H1 (cell line): ENCODE measurements at regions of chr2 and their contacts with region 1.

Region 1: GRCh38 chr2:60522476-60522875 is 31.0 kb downstream of the BCL11A start:
- DNase-seq: peak in 1 of 2 experiments; percentile 44
- H3K4me3 ChIP-seq: no peak overlapping the region
- H3K27ac ChIP-seq: no peak overlapping the region
- H3K4me1 ChIP-seq: peaks cover 5 to 46% (median 27%) of the 10 kb centered on the region in 4 experiments
- H3K27me3 ChIP-seq: no peaks in the 10 kb centered on the region
- CTCF ChIP-seq: no peak
- EP300 ChIP-seq: no peak
- POLR2A ChIP-seq: no peak
- RAD21 ChIP-seq: no peak

Region 2: DNA sequence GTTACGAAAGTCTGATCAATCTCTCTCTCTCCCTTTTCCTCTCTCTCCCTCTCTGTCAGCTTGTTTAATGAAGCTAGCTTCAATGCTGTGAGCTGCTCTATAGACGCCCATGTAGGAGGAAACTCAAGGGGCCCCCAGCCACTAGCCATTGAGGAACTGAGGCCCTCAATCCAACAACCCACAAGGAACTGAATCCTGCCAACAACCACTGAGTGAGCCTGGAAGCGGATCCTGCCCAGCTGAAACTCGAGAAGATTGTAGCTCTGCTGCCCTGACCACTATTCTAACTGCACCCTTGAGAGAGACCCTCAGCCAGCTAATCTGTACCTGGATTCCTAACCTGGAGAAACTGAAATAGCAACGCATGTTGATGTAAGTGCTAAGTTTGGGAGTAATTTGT is 98.2 kb before region 1 on chr2:
- CTCF ChIA-PET with region 1: no interaction called
- POLR2A ChIA-PET with region 1: no interaction called
- DNase-seq: no peak
- H3K4me3 ChIP-seq: no peak overlapping the region
- H3K27ac ChIP-seq: no peak overlapping the region
- H3K4me1 ChIP-seq: peaks cover 0 to 12% (median 8%) of the 10 kb centered on the region in 4 experiments; a peak in 4 of 7 replicates
- H3K27me3 ChIP-seq: no peaks in the 10 kb centered on the region
- CTCF ChIP-seq: no peak
- EP300 ChIP-seq: no peak
- POLR2A ChIP-seq: no peak
- RAD21 ChIP-seq: no peak

Region 3: DNA sequence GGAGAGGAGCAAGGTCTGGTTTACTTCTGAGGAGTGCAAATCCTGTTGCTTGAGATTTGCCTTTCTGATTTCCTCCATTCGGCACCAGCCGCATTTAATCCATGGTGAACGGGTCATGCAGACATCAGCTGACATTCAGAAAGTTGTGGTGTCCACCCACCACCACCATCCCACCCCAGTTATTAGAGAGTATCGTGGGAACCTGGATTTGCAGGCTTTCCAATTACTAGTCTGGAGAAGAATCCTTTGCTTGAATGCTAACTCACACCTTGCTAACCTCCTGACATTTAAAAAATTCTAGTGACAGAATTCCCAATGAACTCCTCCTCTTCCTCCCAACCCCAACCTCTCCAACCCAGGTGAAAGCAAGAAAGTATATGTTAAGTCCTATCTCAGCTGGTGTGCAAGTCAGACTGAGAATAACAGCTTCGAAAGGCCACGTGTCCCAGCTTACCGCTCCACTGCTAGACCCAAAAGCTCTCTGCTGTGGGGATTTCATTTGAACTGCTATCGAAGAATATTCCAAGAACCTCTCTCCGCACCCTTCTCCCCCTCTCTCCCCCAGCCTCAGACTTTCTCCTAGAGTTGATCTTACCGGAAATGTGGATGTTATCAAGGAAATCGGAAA is 13.3 kb after region 1 on chr2:
- CTCF ChIA-PET with region 1: interaction called, 11 read pairs
- POLR2A ChIA-PET with region 1: interaction called, 9 read pairs
- DNase-seq: no peak
- H3K4me3 ChIP-seq: no peak overlapping the region
- H3K27ac ChIP-seq: no peak overlapping the region
- H3K4me1 ChIP-seq: peaks cover 24 to 50% (median 46%) of the 10 kb centered on the region in 4 experiments
- H3K27me3 ChIP-seq: peaks cover 0 to 1% (median 0%) of the 10 kb centered on the region in 4 experiments; a peak in 1 of 7 replicates
- CTCF ChIP-seq: no peak
- EP300 ChIP-seq: no peak
- POLR2A ChIP-seq: no peak
- RAD21 ChIP-seq: no peak

Region 4: GRCh38 chr2:60608679-60609078 is 86.2 kb after region 1 on chr2:
- CTCF ChIA-PET with region 1: no interaction called
- POLR2A ChIA-PET with region 1: no interaction called
- DNase-seq: no peak
- H3K4me3 ChIP-seq: no peak overlapping the region
- H3K27ac ChIP-seq: no peak overlapping the region
- H3K4me1 ChIP-seq: peaks cover 0 to 2% (median 0%) of the 10 kb centered on the region in 4 experiments; a peak in 1 of 7 replicates
- H3K27me3 ChIP-seq: no peaks in the 10 kb centered on the region
- CTCF ChIP-seq: no peak
- EP300 ChIP-seq: no peak
- POLR2A ChIP-seq: no peak
- RAD21 ChIP-seq: no peak

Region 5: GRCh38 chr2:60659026-60659425 is 136.6 kb after region 1 on chr2:
- CTCF ChIA-PET with region 1: no interaction called
- POLR2A ChIA-PET with region 1: no interaction called
- DNase-seq: no peak
- H3K4me3 ChIP-seq: no peak overlapping the region
- H3K27ac ChIP-seq: no peak overlapping the region
- H3K4me1 ChIP-seq: no peaks in the 10 kb centered on the region
- H3K27me3 ChIP-seq: peaks cover 0 to 2% (median 0%) of the 10 kb centered on the region in 4 experiments; a peak in 1 of 7 replicates
- CTCF ChIP-seq: peak in 2 of 3 experiments; percentile 31 to 37; a peak in 3 of 4 replicates
- EP300 ChIP-seq: no peak
- POLR2A ChIP-seq: no peak
- RAD21 ChIP-seq: peak in 1 of 2 experiments; percentile 10; a peak in 1 of 4 replicates

Region 6: DNA sequence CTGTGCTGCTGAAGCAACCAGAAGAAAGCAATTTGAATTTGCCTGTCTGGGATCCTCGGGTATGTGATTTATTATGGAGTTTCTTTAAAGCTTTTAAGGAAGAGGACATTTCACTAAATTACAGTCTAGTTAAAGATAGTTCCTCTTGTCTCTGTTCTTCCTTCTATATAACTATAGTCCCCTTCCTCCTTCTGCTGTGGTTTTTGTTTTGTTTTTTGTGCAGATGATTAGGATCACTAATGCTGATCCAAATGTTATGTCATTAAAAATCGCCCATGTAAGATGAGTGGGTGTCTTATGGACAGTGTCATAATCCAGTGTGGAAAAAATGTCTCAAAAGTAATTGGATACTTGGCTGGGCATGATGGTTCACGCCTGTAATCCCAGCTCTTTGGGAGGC is 258.2 kb after region 1 on chr2:
- CTCF ChIA-PET with region 1: no interaction called
- POLR2A ChIA-PET with region 1: no interaction called
- DNase-seq: no peak
- H3K4me3 ChIP-seq: no peak overlapping the region
- H3K27ac ChIP-seq: no peak overlapping the region
- H3K4me1 ChIP-seq: no peaks in the 10 kb centered on the region
- H3K27me3 ChIP-seq: no peaks in the 10 kb centered on the region
- CTCF ChIP-seq: no peak
- EP300 ChIP-seq: no peak
- POLR2A ChIP-seq: no peak
- RAD21 ChIP-seq: no peak